PC-9 (cell line): ENCODE measurements at regions of chr22 and their contacts with region 1.

Region 1: GRCh38 chr22:36425977-36426523 is 38.3 kb upstream of the MYH9 start:
- DNase-seq: no peak
- H3K4me3 ChIP-seq: no peak overlapping the region
- H3K27ac ChIP-seq: no peak overlapping the region
- H3K4me1 ChIP-seq: peaks cover 17% of the 10 kb centered on the region
- H3K27me3 ChIP-seq: no peaks in the 10 kb centered on the region
- CTCF ChIP-seq: no peak

Region 2: DNA sequence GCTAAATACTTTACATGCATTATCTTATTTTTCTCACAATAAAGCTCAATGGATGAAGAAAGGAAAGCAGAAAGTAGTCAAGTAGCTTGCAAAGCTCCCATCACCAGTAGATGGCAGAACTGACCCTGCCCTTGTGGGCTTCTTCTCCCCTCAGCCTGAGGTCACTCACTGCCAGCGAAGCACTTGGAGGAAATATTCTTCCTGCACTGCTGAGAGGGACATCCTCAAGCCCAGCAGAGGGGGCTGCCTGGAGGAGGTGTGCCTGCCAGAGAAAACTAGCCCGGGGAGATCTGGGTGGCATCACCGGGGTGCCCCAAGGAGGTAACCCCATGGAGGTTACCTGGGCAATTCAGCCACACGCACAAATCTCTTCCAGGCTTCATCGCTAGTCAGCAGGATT is 231.1 kb before region 1 on chr22:
- CTCF ChIA-PET with region 1: no interaction called
- POLR2A ChIA-PET with region 1: no interaction called
- intact Hi-C with region 1: no loop called
- DNase-seq: peak; percentile 47 to 67
- H3K4me3 ChIP-seq: no peak overlapping the region
- H3K27ac ChIP-seq: no peak overlapping the region
- H3K4me1 ChIP-seq: no peaks in the 10 kb centered on the region
- H3K27me3 ChIP-seq: peaks cover 12% of the 10 kb centered on the region; the same call in 1 of the 2 replicates
- CTCF ChIP-seq: peak; percentile 82

Region 3: DNA sequence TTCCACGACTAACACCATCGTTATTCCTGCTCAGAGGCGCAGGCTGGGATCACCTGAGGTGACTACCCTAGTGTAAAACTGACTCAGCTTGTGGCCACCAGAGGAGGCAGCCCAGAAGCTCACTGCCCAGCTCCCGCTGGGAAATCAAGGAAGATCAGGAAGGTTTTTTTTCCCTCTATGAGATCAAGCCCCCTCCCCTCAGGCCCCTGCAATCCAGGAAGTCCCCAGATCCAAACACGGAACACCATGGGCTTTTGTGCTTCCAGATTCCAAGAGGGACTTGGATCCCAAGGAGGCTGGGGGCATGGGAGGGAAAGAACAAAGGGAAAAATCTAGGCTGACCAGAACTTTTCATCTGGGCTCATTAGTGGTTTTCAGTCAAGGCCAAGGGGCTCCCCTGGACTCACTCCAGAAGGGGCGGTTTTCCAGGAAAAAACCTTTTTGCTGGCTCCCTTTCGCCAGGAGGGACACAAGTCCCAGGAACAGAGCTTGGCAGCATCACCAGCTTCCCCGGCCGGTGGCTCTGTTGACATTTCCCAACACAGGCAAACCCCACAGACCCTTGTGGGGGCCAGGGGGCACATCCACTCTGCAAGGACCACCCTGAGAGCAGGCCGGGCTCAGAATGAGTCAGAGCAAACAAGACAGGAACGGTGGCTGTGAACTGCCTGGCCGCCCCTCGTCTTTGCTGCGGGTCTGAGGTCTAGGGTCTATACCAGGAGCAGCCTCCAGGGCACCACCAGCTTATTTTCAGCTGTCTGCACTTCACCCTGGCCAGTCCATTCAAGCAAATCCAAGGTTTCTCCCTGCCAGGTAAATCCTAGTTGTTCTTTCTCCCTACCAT is 75.1 kb before region 1 on chr22:
- CTCF ChIA-PET with region 1: no interaction called
- POLR2A ChIA-PET with region 1: interaction called, 33 read pairs
- intact Hi-C with region 1: no loop called
- DNase-seq: no peak
- H3K4me3 ChIP-seq: no peak overlapping the region
- H3K27ac ChIP-seq: peak overlapping the region; percentile 25
- H3K4me1 ChIP-seq: peaks cover 22% of the 10 kb centered on the region
- H3K27me3 ChIP-seq: no peaks in the 10 kb centered on the region
- CTCF ChIP-seq: no peak

Region 4: DNA sequence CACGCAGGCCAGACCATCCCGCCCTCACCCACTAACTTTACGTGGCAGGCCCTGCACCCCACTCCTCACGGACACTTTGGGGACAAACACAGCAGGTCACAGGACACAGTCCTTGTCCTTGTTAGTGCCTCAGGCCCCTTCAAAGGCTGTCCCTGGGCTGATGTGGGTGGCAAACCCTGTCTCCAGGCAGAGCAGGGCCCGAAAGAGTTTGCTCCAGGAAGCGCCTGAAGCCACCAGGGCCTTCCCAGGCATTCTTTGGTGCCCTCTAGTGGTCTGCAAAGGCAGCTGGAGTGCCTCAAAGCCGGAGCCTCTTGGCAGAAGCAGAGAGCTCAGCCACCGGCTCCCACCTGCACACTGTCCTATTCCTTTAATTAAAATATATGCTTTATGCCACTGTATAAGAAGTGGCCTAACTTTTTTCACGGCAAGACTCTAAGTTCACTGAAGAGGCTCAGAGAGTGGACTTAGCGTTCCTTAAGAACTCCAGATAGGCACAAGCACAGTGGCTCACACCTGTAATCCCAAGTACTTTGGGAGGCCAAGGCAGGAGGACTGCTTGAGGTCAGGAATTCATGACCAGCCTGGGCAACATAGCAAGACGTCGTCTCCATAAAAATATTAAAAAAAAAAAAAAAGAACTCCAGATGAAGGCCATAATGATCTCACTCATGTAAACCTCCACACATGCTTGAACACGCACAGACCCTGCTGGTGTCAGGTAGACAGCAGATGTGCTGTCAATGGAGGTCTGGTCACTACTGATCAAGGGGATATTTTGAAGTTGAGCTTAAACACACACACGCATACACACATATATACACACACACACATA is 44.3 kb after region 1 on chr22:
- CTCF ChIA-PET with region 1: no interaction called
- POLR2A ChIA-PET with region 1: no interaction called
- intact Hi-C with region 1: no loop called
- DNase-seq: peak; percentile 77 to 86
- H3K4me3 ChIP-seq: no peak overlapping the region
- H3K27ac ChIP-seq: no peak overlapping the region
- H3K4me1 ChIP-seq: peaks cover 66% of the 10 kb centered on the region
- H3K27me3 ChIP-seq: no peaks in the 10 kb centered on the region
- CTCF ChIP-seq: peak; percentile 99